BJ (cell line): ENCODE measurements at regions of chr10 and their contacts with region 1.

Region 1: DNA sequence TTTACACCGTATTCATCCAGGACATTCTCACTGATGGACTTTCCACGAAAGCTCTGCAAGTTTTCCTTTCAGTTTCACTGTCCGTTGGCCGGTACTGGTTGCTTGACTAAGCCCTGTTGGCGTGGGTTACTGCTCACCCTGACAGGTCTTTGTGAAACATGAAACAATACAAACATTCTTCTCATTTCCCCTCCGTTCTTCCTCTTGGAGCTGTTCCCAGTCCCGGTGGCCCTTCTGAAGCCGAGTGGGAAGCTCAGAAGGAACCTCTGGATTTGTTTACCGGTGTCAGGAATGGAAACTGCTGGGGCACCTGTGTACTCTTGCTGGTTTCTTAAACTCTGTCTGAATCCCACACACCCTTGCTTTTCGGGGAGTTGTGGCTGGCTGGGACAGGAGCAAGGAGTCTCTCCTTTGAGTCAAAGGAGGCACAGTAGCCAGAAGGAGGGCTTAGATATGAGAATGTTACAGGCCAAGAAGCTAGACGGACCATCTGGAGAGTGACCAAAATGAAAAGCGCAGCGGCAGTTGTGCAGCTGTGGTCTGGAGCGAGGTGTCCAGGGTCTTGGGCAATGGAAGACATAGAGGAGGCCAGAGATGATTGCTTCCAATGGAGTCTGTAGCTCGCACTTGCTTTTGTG is 45.7 kb downstream of the LYZL2 start:
- DNase-seq: no peak
- H3K4me3 ChIP-seq: peak overlapping the region; percentile 28; the same call in 1 of the 2 replicates
- H3K27me3 ChIP-seq: peaks cover 3% of the 10 kb centered on the region
- CTCF ChIP-seq: no peak

Region 2: DNA sequence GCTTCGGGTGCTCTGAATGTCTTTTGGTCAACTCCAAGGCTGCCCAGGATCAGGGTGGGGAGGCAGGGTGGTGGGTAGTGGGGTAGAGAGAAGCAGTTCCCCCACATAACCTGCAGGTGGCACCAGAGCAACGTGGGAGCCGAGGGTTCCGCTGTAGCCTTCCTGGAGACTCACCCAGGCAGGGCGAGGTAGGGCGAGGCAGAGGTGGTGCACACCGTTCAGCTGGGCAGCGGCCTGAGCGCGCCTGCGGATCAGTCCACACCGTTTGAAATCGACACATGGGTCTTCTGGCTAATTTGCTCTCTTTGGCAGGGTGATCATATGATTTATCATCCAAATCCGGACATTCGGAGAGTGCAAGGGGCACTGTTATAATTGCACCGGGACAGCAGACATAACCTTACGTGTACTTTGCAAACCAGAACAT is 191.3 kb before region 1 on chr10:
- CTCF ChIA-PET with region 1: interaction called, 104 read pairs
- POLR2A ChIA-PET with region 1: no interaction called
- DNase-seq: no peak
- H3K4me3 ChIP-seq: no peak overlapping the region
- H3K27me3 ChIP-seq: peaks cover 7% of the 10 kb centered on the region
- CTCF ChIP-seq: peak; percentile 97

Region 3: DNA sequence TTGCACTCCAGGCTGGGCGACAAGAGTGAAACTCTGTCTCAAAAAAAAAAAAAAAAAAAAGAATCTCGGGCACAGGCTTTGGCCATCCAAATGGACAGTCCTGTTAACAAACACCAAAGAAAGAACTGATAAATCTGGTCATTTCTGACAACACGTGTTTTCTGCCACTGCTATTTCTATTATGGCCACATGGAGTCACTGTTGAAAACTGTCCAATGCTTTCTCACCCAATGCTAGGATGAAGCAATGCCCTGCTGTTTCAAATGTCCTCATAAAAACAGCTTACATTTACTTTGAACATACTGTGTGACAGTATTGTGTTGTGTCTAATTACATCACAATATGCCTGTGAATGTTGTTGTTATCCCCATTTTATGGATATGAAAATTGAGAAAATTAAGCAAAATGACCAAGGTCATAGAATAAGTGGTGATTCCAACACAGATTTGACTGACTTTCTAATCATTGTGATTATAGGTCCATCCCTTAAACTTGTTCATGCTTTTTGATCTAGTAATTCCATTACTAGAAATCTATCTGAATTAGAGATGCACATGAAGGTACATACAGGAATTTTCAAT is 169.8 kb before region 1 on chr10:
- CTCF ChIA-PET with region 1: interaction called, 16 read pairs
- POLR2A ChIA-PET with region 1: no interaction called
- DNase-seq: no peak
- H3K4me3 ChIP-seq: no peak overlapping the region
- H3K27me3 ChIP-seq: 0 out of 2 replicates have a peak, but pooled peaks cover 1% of the 10 kb centered on the region
- CTCF ChIP-seq: peak; percentile 82

Region 4: DNA sequence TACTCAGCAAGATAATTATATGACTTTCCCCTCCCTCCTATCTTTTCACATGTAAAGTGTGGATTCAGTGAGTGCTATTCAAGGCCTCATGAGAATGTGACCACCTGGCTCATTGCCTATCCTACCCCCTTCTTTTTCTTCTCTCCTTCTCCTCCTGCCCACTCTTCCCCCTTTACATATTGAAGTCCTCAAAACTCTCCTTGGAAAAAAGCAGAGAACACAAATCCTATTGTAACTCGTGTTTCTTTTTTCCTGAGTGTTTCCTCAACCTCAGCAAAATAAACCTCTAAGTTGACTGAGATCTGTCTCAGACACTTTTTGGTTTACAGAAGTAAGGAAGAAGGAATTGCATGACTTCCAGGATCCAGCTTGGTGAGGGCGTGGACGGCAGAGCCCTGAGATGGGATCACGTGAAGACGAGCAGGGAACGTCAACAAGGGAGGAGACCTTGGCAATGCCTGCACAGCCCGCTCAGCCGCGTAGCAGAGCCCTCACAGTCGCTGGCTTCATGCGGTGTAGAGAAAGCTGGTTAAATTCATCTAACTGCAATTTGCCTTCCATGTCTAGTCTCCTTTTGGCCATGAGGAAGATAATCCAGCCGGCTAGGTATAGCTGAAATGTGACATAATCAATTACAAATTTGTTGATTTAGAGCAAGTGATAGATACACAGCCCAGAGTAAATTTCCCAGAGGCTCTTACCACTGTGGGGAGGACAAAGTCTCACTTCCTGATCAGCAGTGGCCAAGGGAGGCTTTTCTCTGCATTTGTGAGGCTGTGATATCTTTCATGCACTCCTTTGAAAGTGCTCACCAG is 30.1 kb before region 1 on chr10:
- CTCF ChIA-PET with region 1: interaction called, 14 read pairs
- POLR2A ChIA-PET with region 1: no interaction called
- DNase-seq: peak; percentile 20
- H3K4me3 ChIP-seq: peak overlapping the region; percentile 1; the same call in 1 of the 2 replicates
- H3K27me3 ChIP-seq: no peaks in the 10 kb centered on the region
- CTCF ChIP-seq: no peak

Region 5: GRCh38 chr10:30562787-30563186 is 21.1 kb before region 1 on chr10:
- CTCF ChIA-PET with region 1: interaction called, 40 read pairs
- POLR2A ChIA-PET with region 1: no interaction called
- DNase-seq: no peak
- H3K4me3 ChIP-seq: no peak overlapping the region
- H3K27me3 ChIP-seq: peaks cover 6% of the 10 kb centered on the region
- CTCF ChIP-seq: no peak

Region 6: DNA sequence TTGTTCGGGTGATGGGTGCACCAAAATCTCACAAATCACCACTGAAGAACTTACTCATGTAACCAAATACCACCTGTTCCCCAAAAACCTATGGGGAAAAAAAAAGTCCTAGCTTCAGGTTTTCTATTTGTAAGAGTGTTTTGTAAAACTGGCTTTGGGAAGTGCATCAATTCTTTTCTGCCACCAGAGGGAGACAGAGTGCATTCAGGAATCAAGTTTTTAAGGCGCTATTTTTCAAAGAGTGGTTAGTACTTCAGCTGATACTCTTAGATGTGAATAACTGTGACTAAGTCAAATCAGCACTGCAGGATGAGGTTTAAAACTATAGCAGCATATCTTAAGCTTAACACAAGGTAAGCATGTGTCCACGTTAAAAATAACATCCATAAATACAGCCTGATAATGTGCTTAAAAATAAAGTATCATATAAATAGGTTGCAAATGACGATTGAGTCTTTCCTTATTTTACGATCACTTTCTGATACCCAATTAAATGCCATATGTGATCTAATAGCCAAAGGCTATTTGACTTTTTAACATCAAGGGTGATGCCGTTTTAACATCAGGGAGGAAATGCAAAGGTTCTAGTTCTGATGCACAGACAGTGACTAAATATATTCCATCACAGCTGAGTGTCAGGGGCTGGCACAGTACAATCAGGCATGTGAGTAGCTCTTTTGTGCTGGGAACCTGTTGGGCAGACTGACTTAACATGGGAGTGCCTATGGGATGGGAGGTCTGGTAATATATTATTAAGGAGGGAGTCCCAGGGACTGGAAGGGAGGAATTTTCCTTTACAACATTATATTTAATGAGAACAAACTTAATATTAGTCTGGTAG is 56.3 kb after region 1 on chr10:
- CTCF ChIA-PET with region 1: interaction called, 13 read pairs
- POLR2A ChIA-PET with region 1: no interaction called
- DNase-seq: peak; percentile 23
- H3K4me3 ChIP-seq: no peak overlapping the region
- H3K27me3 ChIP-seq: no peaks in the 10 kb centered on the region
- CTCF ChIP-seq: peak; percentile 89

Region 7: GRCh38 chr10:31912898-31913852 is 1329.3 kb after region 1 on chr10:
- CTCF ChIA-PET with region 1: no interaction called
- POLR2A ChIA-PET with region 1: no interaction called
- DNase-seq: no peak
- H3K4me3 ChIP-seq: no peak overlapping the region
- H3K27me3 ChIP-seq: no peaks in the 10 kb centered on the region
- CTCF ChIP-seq: no peak